ENCODE measurements at regions of chr11 and their contacts with region 1.

Region 1: GRCh38 chr11:44627911-44628729 is 62.7 kb downstream of the CD82 start:
- DNase-seq: peak; percentile 49
- ATAC-seq: peak; percentile 83
- H3K4me3 ChIP-seq: no peak overlapping the region
- H3K27ac ChIP-seq: no peak overlapping the region
- H3K4me1 ChIP-seq: peaks cover 5% of the 10 kb centered on the region; the same call in 1 of the 2 replicates
- H3K27me3 ChIP-seq: peaks cover 10% of the 10 kb centered on the region
- CTCF ChIP-seq: no peak
- POLR2A ChIP-seq: no peak
- RAD21 ChIP-seq: no peak

Region 2: DNA sequence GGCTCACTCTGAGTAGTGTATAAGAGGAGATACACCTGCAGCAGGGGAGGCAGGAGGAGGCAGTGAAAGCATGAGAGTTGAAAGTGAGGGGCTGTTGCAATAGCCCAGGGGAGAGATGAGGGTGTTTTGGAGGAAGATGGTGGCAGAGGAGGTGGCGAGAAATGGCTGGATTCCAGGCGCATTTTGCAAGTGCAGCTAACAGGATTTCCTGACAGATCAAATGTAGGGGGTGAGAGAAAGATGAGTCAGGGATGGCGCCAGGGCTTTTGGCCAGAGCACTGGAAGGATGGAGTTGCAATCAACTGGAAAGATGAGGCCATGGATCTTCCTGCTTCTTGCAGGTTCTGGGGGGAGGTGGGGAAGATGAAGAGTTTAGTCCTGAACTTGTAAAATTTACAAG is 81.8 kb after region 1 on chr11:
- CTCF ChIA-PET with region 1: no interaction called
- POLR2A ChIA-PET with region 1: no interaction called
- dilution Hi-C with region 1: no loop called
- in situ Hi-C with region 1: loop called (anchors 5 kb)
- intact Hi-C with region 1: no loop called
- DNase-seq: peak; percentile 27
- ATAC-seq: 0 out of 2 replicates have a peak, but pooled peaks have one; percentile 35
- H3K4me3 ChIP-seq: no peak overlapping the region
- H3K27ac ChIP-seq: no peak overlapping the region
- H3K4me1 ChIP-seq: no peaks in the 10 kb centered on the region
- H3K27me3 ChIP-seq: peaks cover 35% of the 10 kb centered on the region
- CTCF ChIP-seq: no peak
- POLR2A ChIP-seq: no peak
- RAD21 ChIP-seq: no peak

Region 3: DNA sequence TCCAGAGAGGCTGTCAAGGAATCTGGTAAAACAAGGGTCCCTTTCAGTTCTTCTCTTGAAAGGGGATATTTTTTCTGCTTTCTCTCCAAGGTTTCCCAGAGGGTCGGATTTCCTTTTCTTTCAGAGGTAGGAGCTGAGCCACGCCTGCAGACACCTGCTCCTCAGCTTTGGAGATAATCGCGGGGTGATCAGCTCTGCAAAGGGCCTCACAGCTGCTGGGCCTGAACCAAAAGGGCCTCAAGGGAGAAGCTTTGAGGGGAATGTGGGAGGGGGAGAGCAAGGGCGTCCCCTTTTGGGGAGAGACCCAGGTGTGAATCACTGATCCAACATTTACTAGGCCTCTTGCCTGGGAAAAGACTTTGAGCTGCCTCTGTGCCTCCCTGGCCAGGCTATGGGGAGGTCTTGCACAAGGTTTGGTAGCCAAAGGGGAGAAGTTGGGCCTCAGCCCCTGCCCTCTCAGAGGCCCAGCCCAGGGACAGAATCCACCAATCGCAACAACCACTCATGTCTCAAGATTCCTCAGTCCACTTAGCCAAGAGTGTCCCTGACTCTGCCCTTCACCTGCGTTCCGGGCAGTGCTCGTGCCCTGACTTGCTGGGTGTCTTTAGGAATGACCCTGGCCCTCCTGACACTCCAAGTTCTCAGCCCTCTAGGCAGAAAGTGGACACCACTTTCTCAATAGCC is 336.5 kb after region 1 on chr11:
- CTCF ChIA-PET with region 1: no interaction called
- POLR2A ChIA-PET with region 1: no interaction called
- dilution Hi-C with region 1: no loop called
- in situ Hi-C with region 1: no loop called
- intact Hi-C with region 1: no loop called
- DNase-seq: no peak
- ATAC-seq: no peak
- H3K4me3 ChIP-seq: no peak overlapping the region
- H3K27ac ChIP-seq: no peak overlapping the region
- H3K4me1 ChIP-seq: no peaks in the 10 kb centered on the region
- H3K27me3 ChIP-seq: peaks cover 20% of the 10 kb centered on the region
- CTCF ChIP-seq: no peak
- POLR2A ChIP-seq: no peak
- RAD21 ChIP-seq: no peak